ENCODE measurements at regions of chr19 and their contacts with region 1.

Region 1: GRCh38 chr19:48363810-48364563 is at the starts of genes SYNGR4 and TMEM143:
- DNase-seq: peak; percentile 99
- H3K4me3 Mint-ChIP-seq: peak within 1 kb of the TSS; percentile 86
- H3K27ac Mint-ChIP-seq: peak within 1 kb of the TSS; percentile 93
- H3K4me1 Mint-ChIP-seq: peaks cover 12% of the 10 kb centered on the region
- H3K27me3 Mint-ChIP-seq: no peaks in the 10 kb centered on the region
- total RNA-seq, gene SYNGR4: 0.50 to 0.52 TPM
- total RNA-seq, gene TMEM143: 23.9 to 24.1 TPM

Region 2: DNA sequence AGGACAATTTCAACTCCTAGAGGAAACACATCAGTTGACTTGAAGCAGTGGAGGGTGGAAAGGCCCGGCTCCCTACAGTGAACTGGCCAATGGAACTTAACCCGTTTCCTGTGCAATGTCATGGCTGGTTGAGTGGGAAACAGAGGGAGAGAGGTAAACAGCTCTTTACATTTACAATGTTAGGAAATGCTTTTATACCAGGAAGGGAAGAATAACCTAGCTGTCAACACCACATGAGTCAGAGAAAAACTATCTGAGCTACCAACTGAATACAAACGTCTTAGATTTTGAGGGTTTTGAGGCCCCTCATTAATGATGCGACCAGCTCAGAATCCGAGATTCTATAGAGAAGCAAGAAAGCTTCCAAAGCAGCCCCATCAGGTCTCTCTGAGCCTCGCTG is 145.0 kb before region 1 on chr19:
- CTCF ChIA-PET with region 1: no interaction called
- intact Hi-C with region 1: no loop called
- DNase-seq: no peak
- H3K4me3 Mint-ChIP-seq: no peak overlapping the region
- H3K27ac Mint-ChIP-seq: no peak overlapping the region
- H3K4me1 Mint-ChIP-seq: peaks cover 7% of the 10 kb centered on the region
- H3K27me3 Mint-ChIP-seq: no peaks in the 10 kb centered on the region

Region 3: GRCh38 chr19:48255376-48256303 is 108.3 kb before region 1 on chr19 and contains the start of gene CARD8:
- CTCF ChIA-PET with region 1: no interaction called
- intact Hi-C with region 1: loop called (anchors 5 kb)
- DNase-seq: peak; percentile 88
- H3K4me3 Mint-ChIP-seq: peak within 1 kb of the TSS; percentile 92
- H3K27ac Mint-ChIP-seq: peak within 1 kb of the TSS; percentile 97
- H3K4me1 Mint-ChIP-seq: peaks cover 65% of the 10 kb centered on the region
- H3K27me3 Mint-ChIP-seq: no peaks in the 10 kb centered on the region
- total RNA-seq, gene CARD8: 99.8 to 104 TPM

Region 4: DNA sequence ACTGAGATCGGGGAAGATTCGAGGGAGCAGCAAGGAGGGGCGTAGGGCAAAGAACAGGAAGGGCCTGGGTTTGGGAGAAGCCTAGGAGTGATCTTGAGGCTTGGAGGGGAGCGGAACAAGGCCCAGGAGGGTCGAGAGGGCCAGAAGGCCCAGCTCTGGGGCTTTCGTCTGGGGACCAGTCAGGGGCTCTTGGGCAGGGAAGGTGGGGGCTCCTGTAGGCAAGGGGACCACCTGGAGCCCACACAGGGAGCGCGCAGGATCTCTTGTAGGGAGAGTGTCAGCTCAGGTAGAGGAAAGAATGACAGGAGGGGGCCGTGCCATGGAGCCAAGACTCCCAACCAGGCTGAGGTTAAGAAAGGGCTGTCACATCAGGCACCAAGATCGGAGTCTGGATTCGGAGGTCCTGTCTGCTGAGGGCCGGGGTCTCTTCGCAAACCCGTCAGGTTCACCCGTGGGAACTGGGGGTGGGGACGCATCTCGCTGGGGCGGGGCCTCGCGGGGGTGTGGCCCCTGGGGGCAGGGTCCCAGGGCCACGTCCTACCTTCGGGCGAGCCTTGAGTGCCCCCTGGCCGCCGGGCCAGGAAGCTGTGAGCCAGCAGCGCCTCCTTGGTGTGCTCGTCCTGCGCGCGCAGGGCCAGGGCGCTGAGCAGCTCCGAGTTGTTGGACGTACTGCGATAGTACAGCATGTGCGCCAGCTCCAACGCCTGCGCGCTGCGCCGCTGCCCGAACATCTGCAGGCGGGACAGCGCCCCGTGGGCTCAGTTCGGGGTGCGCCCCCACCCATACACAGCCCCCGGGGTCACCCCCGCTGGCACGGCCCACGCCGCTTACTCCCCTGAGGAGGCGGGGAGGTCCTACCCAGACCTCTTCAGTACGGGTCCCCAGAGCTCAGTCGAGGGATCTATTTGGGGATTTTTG is 30.3 kb before region 1 on chr19:
- CTCF ChIA-PET with region 1: interaction called, 3 read pairs
- intact Hi-C with region 1: loop called (anchors 1 kb)
- DNase-seq: peak; percentile 95
- H3K4me3 Mint-ChIP-seq: peak overlapping the region; percentile 87
- H3K27ac Mint-ChIP-seq: peak overlapping the region; percentile 92
- H3K4me1 Mint-ChIP-seq: peaks cover 47% of the 10 kb centered on the region
- H3K27me3 Mint-ChIP-seq: no peaks in the 10 kb centered on the region

Region 5: GRCh38 chr19:48379058-48379457 is 15.1 kb after region 1 on chr19:
- CTCF ChIA-PET with region 1: no interaction called
- intact Hi-C with region 1: no loop called
- DNase-seq: no peak
- H3K4me3 Mint-ChIP-seq: no peak overlapping the region
- H3K27ac Mint-ChIP-seq: no peak overlapping the region
- H3K4me1 Mint-ChIP-seq: no peaks in the 10 kb centered on the region
- H3K27me3 Mint-ChIP-seq: no peaks in the 10 kb centered on the region

Region 6: GRCh38 chr19:48419158-48419920 is 55.4 kb after region 1 on chr19:
- CTCF ChIA-PET with region 1: no interaction called
- intact Hi-C with region 1: loop called (anchors 2 kb)
- DNase-seq: peak; percentile 77
- H3K4me3 Mint-ChIP-seq: peak overlapping the region; percentile 57
- H3K27ac Mint-ChIP-seq: no peak overlapping the region
- H3K4me1 Mint-ChIP-seq: peaks cover 22% of the 10 kb centered on the region
- H3K27me3 Mint-ChIP-seq: peaks cover 13% of the 10 kb centered on the region

Region 7: DNA sequence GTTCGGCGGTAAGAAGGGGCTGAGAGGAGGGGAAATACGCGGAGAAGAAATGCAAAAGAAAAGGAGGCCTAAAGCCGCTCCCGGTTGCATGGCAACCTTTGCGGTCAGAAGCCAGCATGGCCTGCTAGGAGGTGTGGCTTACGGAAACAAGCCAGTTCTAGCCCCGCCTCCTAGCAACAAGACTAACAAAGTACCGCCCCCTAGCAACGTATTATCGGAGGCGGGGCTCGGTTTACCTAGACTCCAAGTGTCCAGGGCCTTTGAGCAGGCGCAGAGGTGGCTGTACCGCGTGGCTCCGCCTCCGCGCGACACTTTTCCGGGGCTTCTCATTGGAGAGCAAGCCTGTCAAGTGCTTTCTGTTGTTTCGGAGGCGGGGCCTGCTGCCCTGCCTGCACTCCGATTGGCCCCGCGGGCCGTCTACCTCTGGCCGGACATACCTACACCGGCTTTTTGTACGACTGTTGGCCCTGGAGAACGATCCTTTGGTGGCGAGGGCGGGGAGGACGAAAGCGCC is 104.8 kb after region 1 on chr19:
- CTCF ChIA-PET with region 1: no interaction called
- intact Hi-C with region 1: loop called (anchors 1 kb)
- DNase-seq: peak; percentile 100
- H3K4me3 Mint-ChIP-seq: peak overlapping the region; percentile 84
- H3K27ac Mint-ChIP-seq: peak overlapping the region; percentile 85
- H3K4me1 Mint-ChIP-seq: peaks cover 21% of the 10 kb centered on the region
- H3K27me3 Mint-ChIP-seq: no peaks in the 10 kb centered on the region

Region 8: DNA sequence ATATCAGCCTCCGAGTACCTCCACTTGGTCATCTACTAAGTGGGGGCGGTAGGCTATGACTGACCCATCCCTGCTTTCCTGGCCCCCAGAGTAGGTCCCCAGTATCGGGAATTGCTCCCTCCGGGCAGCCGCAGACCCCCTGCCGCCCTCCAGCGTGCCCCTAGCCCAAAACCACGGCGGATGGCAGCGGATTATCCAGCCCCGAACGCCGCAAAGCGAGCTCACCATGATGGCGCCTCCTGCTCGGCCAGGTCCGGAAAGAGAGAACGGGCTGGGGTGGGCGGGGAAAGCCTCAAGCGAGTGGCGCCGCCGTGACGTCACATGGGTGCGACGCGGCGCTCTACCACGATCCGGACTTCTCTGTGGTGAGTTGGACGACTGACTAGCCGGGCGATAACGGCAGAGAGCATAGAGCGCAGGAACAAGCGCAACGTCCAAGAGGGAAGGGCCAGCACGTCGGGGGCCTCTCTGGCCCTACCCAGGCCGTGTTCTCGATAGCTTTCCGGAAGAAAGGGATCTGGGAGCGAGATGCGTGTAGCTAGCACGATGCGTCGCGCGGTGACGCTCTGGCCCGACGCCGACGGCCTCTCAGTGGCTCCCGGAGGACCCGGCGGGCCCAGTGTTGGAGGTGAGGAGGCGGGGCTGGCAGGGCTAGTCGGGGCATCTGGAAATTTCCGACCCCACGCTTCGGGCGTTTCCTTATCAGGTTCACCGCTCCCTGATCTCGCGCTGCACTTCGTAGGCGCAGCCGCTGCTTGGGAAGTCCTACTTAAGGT is 255.1 kb after region 1 on chr19 and contains the starts of genes RPL18 and SPHK2:
- CTCF ChIA-PET with region 1: no interaction called
- intact Hi-C with region 1: loop called (anchors 1 kb)
- DNase-seq: peak; percentile 95
- H3K4me3 Mint-ChIP-seq: peak within 1 kb of the TSS; percentile 99
- H3K27ac Mint-ChIP-seq: peak within 1 kb of the TSS; percentile 99
- H3K4me1 Mint-ChIP-seq: peaks cover 53% of the 10 kb centered on the region
- H3K27me3 Mint-ChIP-seq: no peaks in the 10 kb centered on the region
- total RNA-seq, gene RPL18: 2,373 to 2,473 TPM
- total RNA-seq, gene SPHK2: 20.1 to 20.6 TPM

Region 9: GRCh38 chr19:49451430-49452181 is 1087.6 kb after region 1 on chr19 and contains the start of gene PIH1D1:
- CTCF ChIA-PET with region 1: no interaction called
- intact Hi-C with region 1: loop called (anchors 5 kb)
- DNase-seq: peak; percentile 99
- H3K4me3 Mint-ChIP-seq: peak within 1 kb of the TSS; percentile 100
- H3K27ac Mint-ChIP-seq: peak within 1 kb of the TSS; percentile 100
- H3K4me1 Mint-ChIP-seq: peaks cover 40% of the 10 kb centered on the region
- H3K27me3 Mint-ChIP-seq: no peaks in the 10 kb centered on the region
- total RNA-seq, gene PIH1D1: 80.7 to 84.4 TPM